Activated CD4-positive, alpha-beta T cell treated with anti-CD3 and anti-CD28 coated beads, Interleukin-2, amount 10 ng/mL, durations not matched to agents 24 days and 14 days (primary cell): ENCODE measurements at regions of chr4 and their contacts with region 1.

Region 1: GRCh38 chr4:140252742-140253555 is 99.0 kb upstream of the MAML3 start:
- DNase-seq: peak; percentile 89
- H3K4me3 Mint-ChIP-seq: peak overlapping the region; percentile 62
- H3K27ac Mint-ChIP-seq: no peak overlapping the region
- H3K4me1 Mint-ChIP-seq: peaks cover 28% of the 10 kb centered on the region
- H3K27me3 Mint-ChIP-seq: peaks cover 23% of the 10 kb centered on the region

Region 2: DNA sequence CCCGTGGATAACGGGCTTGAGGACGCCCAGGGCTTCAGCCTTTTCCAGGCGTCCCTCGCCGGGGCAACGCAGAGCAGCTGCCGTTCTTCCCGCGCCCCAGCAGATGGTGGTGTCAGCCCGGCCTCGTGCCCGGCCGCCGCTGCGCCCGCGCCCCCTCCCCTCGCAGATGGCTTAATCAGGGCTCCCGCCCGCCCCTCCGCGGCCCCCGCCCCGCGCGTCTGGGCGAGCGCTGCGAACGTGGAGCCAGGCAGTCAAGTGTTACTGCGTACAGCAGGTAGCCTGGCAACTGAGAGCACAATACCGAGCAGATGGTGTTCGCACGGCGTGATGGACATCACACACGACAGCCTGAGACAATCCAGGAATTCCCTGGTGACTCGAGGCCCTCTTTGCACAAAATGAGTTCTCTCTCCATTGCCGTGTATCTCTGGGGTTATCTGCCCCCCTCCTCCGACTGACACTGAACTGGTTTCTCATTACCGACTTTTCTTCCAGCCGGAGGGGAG is 518.0 kb before region 1 on chr4:
- intact Hi-C with region 1: loop called (anchors 1 kb)
- DNase-seq: peak; percentile 86
- H3K4me3 Mint-ChIP-seq: peak overlapping the region; percentile 76
- H3K27ac Mint-ChIP-seq: peak overlapping the region; percentile 43
- H3K4me1 Mint-ChIP-seq: peaks cover 7% of the 10 kb centered on the region
- H3K27me3 Mint-ChIP-seq: peaks cover 53% of the 10 kb centered on the region

Region 3: DNA sequence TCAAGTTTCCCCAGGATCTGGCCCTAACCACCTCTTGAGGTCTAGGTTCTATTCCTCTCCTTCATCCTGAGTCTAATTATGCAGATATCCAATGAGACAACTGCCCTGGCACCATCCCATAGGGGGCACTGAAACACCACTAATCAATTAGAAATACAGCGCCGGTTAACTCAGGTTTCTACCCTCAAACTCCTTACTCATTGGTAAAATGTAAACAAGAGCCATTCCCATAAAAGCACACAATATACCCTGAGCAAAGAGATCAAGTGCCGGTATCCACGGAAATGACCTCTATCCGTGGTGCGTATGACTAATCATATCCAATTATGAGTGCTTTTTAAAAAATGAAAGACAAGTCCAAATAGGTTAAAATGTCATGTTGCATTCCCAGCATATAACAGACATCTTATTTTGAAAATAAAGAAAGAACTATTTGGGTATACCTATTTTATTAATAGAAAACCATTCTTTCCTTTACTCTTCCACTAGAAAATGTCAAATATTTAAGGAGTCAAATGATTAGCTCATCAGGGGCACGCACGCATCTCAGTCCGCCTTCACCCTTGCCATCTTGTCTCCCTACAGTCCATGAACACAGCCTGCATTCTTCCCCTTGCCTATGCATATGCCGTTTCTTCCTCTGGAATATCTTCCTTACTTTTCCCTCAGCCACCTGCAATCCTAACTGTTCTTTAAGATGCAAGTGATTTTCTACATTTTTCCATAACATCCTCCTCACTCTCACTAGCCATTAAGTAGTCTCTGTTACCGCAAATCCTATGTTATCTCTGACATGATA is 240.1 kb before region 1 on chr4:
- intact Hi-C with region 1: loop called (anchors 1 kb)
- DNase-seq: peak; percentile 86
- H3K4me3 Mint-ChIP-seq: no peak overlapping the region
- H3K27ac Mint-ChIP-seq: no peak overlapping the region
- H3K4me1 Mint-ChIP-seq: peaks cover 6% of the 10 kb centered on the region
- H3K27me3 Mint-ChIP-seq: peaks cover 34% of the 10 kb centered on the region

Region 4: GRCh38 chr4:140233791-140234696 is 18.9 kb before region 1 on chr4:
- intact Hi-C with region 1: loop called (anchors 2 kb)
- DNase-seq: peak; percentile 66
- H3K4me3 Mint-ChIP-seq: peak overlapping the region; percentile 77
- H3K27ac Mint-ChIP-seq: peak overlapping the region; percentile 95
- H3K4me1 Mint-ChIP-seq: peaks cover 28% of the 10 kb centered on the region
- H3K27me3 Mint-ChIP-seq: peaks cover 4% of the 10 kb centered on the region

Region 5: DNA sequence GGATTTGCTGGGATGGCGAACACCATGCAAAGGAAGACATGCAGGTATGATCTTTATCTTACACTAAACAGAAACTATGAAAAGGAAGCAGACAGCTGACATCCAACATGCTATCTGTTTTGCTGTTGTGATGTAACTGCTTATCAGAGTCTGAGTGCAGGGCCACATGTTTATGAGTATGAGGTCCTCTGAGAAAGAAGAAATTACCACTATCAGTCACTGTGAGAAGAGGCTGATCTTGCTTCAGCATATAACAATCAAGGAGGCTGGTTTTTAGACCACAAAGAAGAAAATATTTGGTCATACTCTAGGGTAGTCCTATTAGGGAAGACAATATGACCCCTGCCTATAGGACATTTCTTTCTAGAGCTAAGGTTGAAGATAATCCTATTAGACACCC is 156.0 kb after region 1 on chr4:
- intact Hi-C with region 1: no loop called
- DNase-seq: no peak
- H3K4me3 Mint-ChIP-seq: no peak overlapping the region
- H3K27ac Mint-ChIP-seq: no peak overlapping the region
- H3K4me1 Mint-ChIP-seq: no peaks in the 10 kb centered on the region
- H3K27me3 Mint-ChIP-seq: peaks cover 17% of the 10 kb centered on the region